HCT116 (cell line): ENCODE measurements at regions of chr10 and their contacts with region 1.

Region 1: GRCh38 chr10:118568327-118568848 is 27.1 kb downstream of the PRLHR start:
- DNase-seq: peak; percentile 63
- ATAC-seq: peak; percentile 74
- H3K4me3 ChIP-seq: peak overlapping the region in 1 of 2 experiments; percentile 20; a peak in 2 of 4 replicates
- H3K27ac ChIP-seq: no peak overlapping the region
- H3K4me1 ChIP-seq: peaks cover 0 to 4% of the 10 kb centered on the region in 2 experiments; a peak in 1 of 4 replicates
- H3K27me3 ChIP-seq: no peaks in the 10 kb centered on the region
- CTCF ChIP-seq: peak; percentile 70 to 93 (median 73)
- POLR2A ChIP-seq: no peak
- RAD21 ChIP-seq: peak; percentile 96

Region 2: DNA sequence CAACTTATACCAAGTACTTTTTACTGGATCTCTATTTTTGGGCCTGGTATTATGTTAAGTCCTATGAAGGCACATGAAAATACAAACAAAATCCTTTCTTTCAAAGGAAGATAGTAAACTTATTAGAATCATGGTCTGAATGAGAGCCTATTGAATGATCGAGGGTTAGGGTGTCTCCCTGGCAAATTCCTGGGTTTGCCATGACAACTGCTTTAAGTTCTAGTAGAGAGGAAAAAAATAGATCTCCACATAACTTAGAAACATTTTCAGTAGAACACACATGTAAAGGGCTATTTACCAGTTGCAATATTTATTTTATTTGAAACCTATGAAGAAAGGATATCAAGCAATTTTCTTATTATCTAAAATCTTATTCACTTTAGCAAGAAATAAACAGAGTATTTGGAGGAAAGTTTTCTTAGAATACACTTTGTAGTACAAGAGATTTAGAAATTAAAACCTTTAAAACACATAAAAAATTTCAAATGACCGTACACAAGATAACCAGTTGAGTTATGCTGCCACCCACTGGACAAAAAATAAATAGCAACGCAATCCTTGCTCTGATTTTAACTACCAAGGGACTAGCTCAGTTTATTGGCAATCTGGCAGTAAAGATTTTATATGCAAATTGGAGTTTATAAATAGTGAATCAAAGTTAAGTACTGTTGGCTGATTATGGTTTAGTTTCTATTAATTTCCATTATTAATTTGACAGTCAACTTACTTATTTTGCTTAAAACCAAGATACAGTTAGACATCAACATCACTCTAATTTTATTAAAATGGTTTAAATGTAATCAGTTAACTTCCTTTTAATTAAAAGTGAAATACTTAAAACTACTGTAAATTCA is 152.5 kb after region 1 on chr10:
- CTCF ChIA-PET with region 1: interaction called, 44 read pairs
- POLR2A ChIA-PET with region 1: no interaction called
- RAD21 ChIA-PET with region 1: interaction called, 3 to 9 read pairs
- intact Hi-C with region 1: loop called (anchors 1 kb)
- DNase-seq: peak; percentile 50
- ATAC-seq: peak; percentile 79
- H3K4me3 ChIP-seq: no peak overlapping the region
- H3K27ac ChIP-seq: no peak overlapping the region
- H3K4me1 ChIP-seq: no peaks in the 10 kb centered on the region
- H3K27me3 ChIP-seq: no peaks in the 10 kb centered on the region
- CTCF ChIP-seq: peak; percentile 79 to 98 (median 86)
- POLR2A ChIP-seq: no peak
- RAD21 ChIP-seq: peak; percentile 85

Region 3: GRCh38 chr10:118800920-118801319 is 232.5 kb after region 1 on chr10:
- CTCF ChIA-PET with region 1: interaction called, 17 read pairs
- POLR2A ChIA-PET with region 1: interaction called, 3 read pairs
- RAD21 ChIA-PET with region 1: interaction called, 7 read pairs
- intact Hi-C with region 1: loop called (anchors 1 kb)
- DNase-seq: no peak
- ATAC-seq: peak; percentile 67
- H3K4me3 ChIP-seq: no peak overlapping the region
- H3K27ac ChIP-seq: no peak overlapping the region
- H3K4me1 ChIP-seq: peaks cover 0 to 39% of the 10 kb centered on the region in 2 experiments; a peak in 2 of 4 replicates
- H3K27me3 ChIP-seq: no peaks in the 10 kb centered on the region
- CTCF ChIP-seq: peak; percentile 49 to 70 (median 68); a peak in 5 of 6 replicates
- POLR2A ChIP-seq: no peak
- RAD21 ChIP-seq: peak; percentile 87

Region 4: DNA sequence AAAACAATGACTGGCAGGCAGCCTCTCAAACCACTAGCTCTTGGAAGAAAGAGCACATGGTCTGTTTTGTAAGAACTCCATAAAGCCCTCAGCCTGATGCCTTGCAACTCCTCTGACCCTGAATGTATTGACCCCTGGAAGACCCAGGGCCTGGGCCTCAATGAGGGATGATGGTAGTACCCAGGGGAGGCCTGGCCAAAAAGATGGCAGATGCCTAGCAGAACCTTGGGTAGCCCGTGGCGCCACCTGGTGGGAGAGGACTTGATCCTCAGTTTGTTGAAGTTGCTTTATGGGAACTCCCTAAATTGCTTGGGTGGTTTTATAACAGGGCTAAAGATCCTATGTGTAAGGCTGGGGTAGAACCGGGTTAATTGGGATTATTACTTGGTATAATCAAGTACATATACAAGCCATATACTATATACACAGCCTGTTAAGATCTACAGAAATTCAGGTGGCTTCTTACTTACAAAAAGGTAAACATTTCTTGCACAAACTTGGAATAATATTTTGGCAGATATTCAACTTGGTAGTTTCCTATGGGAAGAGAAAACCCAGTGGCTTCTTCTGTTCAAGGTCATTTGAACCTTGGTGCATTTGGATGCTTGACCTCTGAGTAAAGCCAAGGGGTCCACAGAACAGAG is 282.2 kb after region 1 on chr10:
- CTCF ChIA-PET with region 1: interaction called, 26 read pairs
- POLR2A ChIA-PET with region 1: no interaction called
- RAD21 ChIA-PET with region 1: no interaction called
- intact Hi-C with region 1: loop called (anchors 1 kb)
- DNase-seq: peak; percentile 88
- ATAC-seq: peak; percentile 97
- H3K4me3 ChIP-seq: no peak overlapping the region
- H3K27ac ChIP-seq: no peak overlapping the region
- H3K4me1 ChIP-seq: peaks cover 0 to 6% of the 10 kb centered on the region in 2 experiments; a peak in 2 of 4 replicates
- H3K27me3 ChIP-seq: no peaks in the 10 kb centered on the region
- CTCF ChIP-seq: peak; percentile 95 to 99 (median 98)
- POLR2A ChIP-seq: no peak
- RAD21 ChIP-seq: peak; percentile 97

Region 5: DNA sequence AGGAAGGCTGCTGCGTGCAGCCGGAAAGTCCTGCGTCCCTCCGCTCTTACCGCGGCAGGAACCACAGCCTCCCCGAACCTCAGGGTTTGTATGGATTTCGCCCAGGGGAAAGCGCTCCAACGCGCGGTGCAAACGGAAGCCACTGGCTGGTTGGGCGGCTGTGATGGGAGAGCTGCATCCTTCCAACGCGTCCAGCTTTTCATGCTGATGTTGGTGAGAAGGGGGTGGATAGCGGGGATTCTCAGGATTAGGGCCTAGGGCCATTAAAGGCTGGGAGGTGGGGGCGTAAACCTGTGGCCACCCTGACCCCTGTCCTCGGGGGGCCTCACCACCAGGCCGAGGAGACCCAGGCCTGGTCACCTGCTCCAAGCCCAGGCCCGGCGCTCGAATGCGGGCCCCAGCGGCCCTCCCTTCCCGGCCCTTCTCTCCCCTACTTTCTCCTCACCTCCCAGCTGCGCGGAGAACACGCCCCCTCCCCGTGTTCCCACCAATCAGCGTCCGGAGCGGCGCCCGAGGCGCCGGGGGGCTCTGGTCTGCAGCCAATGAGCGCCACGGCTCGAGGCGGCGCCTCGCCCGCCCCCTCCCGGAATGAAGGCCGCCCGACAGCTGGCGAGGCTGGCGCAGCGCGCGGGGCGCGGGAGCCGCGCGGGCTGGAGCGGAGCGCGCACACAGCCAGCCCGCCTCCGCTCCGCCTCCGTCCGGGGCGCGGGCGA is 460.7 kb after region 1 on chr10:
- CTCF ChIA-PET with region 1: interaction called, 4 read pairs
- POLR2A ChIA-PET with region 1: no interaction called
- RAD21 ChIA-PET with region 1: interaction called in 1 of 2 experiments, 3 read pairs
- intact Hi-C with region 1: loop called (anchors 5 kb)
- DNase-seq: peak; percentile 85
- ATAC-seq: peak; percentile 82
- H3K4me3 ChIP-seq: peak overlapping the region; percentile 17 to 32; a peak in 3 of 4 replicates
- H3K27ac ChIP-seq: no peak overlapping the region
- H3K4me1 ChIP-seq: peaks cover 20 to 49% of the 10 kb centered on the region in 2 experiments
- H3K27me3 ChIP-seq: no peaks in the 10 kb centered on the region
- CTCF ChIP-seq: 0 out of 6 replicates have a peak, but pooled peaks of 1 of the 3 experiments have one; percentile 23
- POLR2A ChIP-seq: no peak
- RAD21 ChIP-seq: no peak